ENCODE measurements at regions of chr5 and their contacts with region 1.

Region 1: DNA sequence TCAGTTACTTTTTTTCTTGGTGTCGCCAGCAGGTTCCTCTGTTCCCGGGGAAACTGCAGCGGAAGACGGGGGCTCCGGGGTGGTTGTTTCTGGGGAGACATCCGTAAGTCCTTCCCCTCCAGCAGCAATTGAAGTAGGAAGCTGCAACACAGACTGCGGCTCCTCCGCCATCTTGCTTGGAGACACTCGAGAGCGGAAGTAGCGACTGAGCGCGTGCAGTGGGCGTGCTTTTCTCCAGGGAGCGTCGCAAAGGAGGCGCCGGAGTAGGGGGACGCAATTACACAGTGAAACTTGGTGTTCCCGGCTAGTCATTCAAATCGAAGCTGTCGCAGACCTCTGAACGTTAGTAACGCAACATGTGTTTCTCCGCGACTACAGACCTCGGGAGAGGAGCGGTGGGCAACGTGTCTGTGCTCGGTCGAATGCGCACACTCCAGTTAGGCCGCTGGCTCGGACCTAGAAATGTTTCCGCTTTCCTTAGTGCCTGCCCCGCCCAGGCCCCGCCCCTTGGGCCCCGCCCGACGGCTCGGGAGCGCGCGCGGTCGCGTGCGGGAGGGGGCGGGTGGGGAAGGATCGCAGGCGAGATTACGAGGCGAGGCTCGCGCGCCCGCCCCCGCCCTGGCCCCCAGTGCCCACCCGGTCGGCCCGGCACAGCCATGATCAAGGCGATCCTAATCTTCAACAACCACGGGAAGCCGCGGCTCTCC is at the starts of genes AP3S1 and ATG12:
- DNase-seq: peak; percentile 87
- ATAC-seq: peak; percentile 75
- H3K4me3 ChIP-seq: peak within 1 kb of the TSS; percentile 72
- H3K27ac ChIP-seq: peak within 1 kb of the TSS; percentile 77
- H3K4me1 ChIP-seq: peaks cover 26% of the 10 kb centered on the region
- H3K27me3 ChIP-seq: no peaks in the 10 kb centered on the region
- CTCF ChIP-seq: no peak
- total RNA-seq, gene AP3S1: 32.7 and 48.2 TPM in 2 replicates
- total RNA-seq, gene ATG12: 18.7 and 18.9 TPM in 2 replicates

Region 2: DNA sequence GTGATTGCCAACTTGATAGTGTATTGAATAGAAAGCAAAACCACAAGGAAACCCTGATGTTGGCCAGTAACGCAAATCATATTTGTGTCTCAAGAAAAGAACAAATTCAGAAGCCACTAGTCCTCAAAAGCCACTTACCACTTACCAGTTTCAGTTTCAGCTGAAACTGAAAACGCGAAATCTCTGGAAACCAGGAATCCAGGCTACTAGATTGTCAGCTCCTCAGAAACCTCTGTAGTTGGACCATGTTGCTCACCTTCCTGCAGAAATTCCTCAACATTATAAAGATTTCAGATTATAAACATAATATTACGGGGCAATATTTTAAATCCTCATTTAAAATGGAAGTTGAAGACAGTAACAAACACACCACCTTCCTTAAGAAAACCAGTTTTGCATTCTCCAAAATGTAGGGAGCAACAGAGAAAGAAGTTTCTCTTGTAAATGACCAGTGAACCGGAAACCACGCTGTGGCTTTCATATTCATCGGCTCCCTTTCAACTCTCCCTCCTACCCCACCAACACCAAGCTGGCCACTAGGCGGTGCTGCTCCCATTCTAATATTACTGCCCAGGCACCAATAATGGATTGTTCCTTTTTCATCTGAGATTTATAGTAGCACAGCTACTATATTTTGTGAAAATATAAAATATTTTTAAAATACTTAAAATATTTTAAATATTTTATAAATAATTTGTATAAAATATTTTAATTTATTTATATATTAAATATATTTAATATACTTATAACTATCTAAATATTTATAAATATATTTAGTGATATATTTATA is 207.0 kb before region 1 on chr5:
- CTCF ChIA-PET with region 1: no interaction called
- POLR2A ChIA-PET with region 1: no interaction called
- intact Hi-C with region 1: loop called (anchors 1 kb)
- DNase-seq: peak; percentile 85
- ATAC-seq: peak; percentile 96
- H3K4me3 ChIP-seq: peak overlapping the region; percentile 39
- H3K27ac ChIP-seq: no peak overlapping the region
- H3K4me1 ChIP-seq: no peaks in the 10 kb centered on the region
- H3K27me3 ChIP-seq: no peaks in the 10 kb centered on the region
- CTCF ChIP-seq: peak; percentile 80

Region 3: DNA sequence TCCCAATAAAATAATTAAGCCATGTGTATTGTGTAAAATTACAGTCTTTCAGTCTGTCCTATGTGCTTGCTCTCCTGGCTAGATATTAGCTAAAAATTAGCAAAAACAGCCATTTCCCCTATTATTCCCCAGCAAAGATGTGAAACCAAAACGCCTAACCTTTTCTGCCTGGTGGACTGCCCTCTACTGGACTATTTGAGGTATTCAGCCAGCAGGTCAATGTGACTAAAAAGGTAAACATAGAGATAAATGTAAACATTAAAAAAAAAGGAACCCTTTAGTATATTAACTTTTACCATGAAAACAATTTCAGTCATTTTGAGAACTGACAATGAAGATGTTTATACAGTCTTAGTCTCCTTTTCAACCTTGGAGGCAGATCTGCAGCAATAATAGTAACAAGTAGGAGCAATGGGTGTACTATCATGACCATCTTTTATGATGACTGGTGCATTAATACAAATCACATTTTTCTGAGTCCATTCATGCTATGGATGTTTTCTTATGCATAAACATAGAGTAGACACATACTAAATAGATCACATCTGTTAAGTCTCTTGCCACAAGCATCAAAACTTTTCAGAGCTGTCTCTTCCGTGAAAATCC is 10.3 kb before region 1 on chr5:
- CTCF ChIA-PET with region 1: no interaction called
- POLR2A ChIA-PET with region 1: no interaction called
- intact Hi-C with region 1: loop called (anchors 1 kb)
- DNase-seq: peak; percentile 66
- ATAC-seq: peak; percentile 81
- H3K4me3 ChIP-seq: no peak overlapping the region
- H3K27ac ChIP-seq: no peak overlapping the region
- H3K4me1 ChIP-seq: no peaks in the 10 kb centered on the region
- H3K27me3 ChIP-seq: no peaks in the 10 kb centered on the region
- CTCF ChIP-seq: peak; percentile 87

Region 4: GRCh38 chr5:115857636-115858309 is 16.2 kb after region 1 on chr5:
- CTCF ChIA-PET with region 1: no interaction called
- POLR2A ChIA-PET with region 1: no interaction called
- intact Hi-C with region 1: loop called (anchors 2 kb)
- DNase-seq: peak; percentile 81
- ATAC-seq: peak; percentile 74
- H3K4me3 ChIP-seq: no peak overlapping the region
- H3K27ac ChIP-seq: peak overlapping the region; percentile 45
- H3K4me1 ChIP-seq: peaks cover 16% of the 10 kb centered on the region
- H3K27me3 ChIP-seq: no peaks in the 10 kb centered on the region
- CTCF ChIP-seq: no peak

Region 5: GRCh38 chr5:116032094-116032517 is 190.6 kb after region 1 on chr5 and contains the start of gene ARL14EPL:
- CTCF ChIA-PET with region 1: no interaction called
- POLR2A ChIA-PET with region 1: no interaction called
- intact Hi-C with region 1: loop called (anchors 2 kb)
- DNase-seq: peak; percentile 87
- ATAC-seq: peak; percentile 100
- H3K4me3 ChIP-seq: no peak within 1 kb of the TSS
- H3K27ac ChIP-seq: peak within 1 kb of the TSS; percentile 43
- H3K4me1 ChIP-seq: peaks cover 30% of the 10 kb centered on the region
- H3K27me3 ChIP-seq: no peaks in the 10 kb centered on the region
- CTCF ChIP-seq: peak; percentile 46; the same call in 1 of the 2 replicates
- total RNA-seq, gene ARL14EPL: not detected in 2 replicates

Region 6: GRCh38 chr5:116068028-116068632 is 226.6 kb after region 1 on chr5:
- CTCF ChIA-PET with region 1: no interaction called
- POLR2A ChIA-PET with region 1: no interaction called
- intact Hi-C with region 1: loop called (anchors 2 kb)
- DNase-seq: peak; percentile 61
- ATAC-seq: peak; percentile 45; the same call in 1 of the 2 replicates
- H3K4me3 ChIP-seq: no peak overlapping the region
- H3K27ac ChIP-seq: no peak overlapping the region
- H3K4me1 ChIP-seq: no peaks in the 10 kb centered on the region
- H3K27me3 ChIP-seq: no peaks in the 10 kb centered on the region
- CTCF ChIP-seq: peak; percentile 84

Region 7: GRCh38 chr5:116374434-116374852 is 532.9 kb after region 1 on chr5:
- CTCF ChIA-PET with region 1: no interaction called
- POLR2A ChIA-PET with region 1: no interaction called
- intact Hi-C with region 1: no loop called
- DNase-seq: no peak
- ATAC-seq: no peak
- H3K4me3 ChIP-seq: no peak overlapping the region
- H3K27ac ChIP-seq: no peak overlapping the region
- H3K4me1 ChIP-seq: no peaks in the 10 kb centered on the region
- H3K27me3 ChIP-seq: no peaks in the 10 kb centered on the region
- CTCF ChIP-seq: no peak

Measured in PC-3 (cell line).